ENCODE measurements at regions of chr18 and their contacts with region 1.

Region 1: GRCh38 chr18:36284671-36285295 is 12.7 kb upstream of the FHOD3 start:
- DNase-seq: no peak
- H3K4me3 ChIP-seq: no peak overlapping the region
- H3K27ac ChIP-seq: no peak overlapping the region
- H3K4me1 ChIP-seq: no peaks in the 10 kb centered on the region
- H3K27me3 ChIP-seq: peaks cover 0 to 2% (median 0%) of the 10 kb centered on the region in 4 experiments; a peak in 1 of 7 replicates
- CTCF ChIP-seq: peak in 2 of 3 experiments; percentile 82 to 83; a peak in 3 of 4 replicates
- EP300 ChIP-seq: no peak
- POLR2A ChIP-seq: no peak
- RAD21 ChIP-seq: peak; percentile 99

Region 2: GRCh38 chr18:36095936-36096519 is 188.8 kb before region 1 on chr18:
- CTCF ChIA-PET with region 1: interaction called, 23 read pairs
- POLR2A ChIA-PET with region 1: no interaction called
- DNase-seq: no peak
- H3K4me3 ChIP-seq: no peak overlapping the region
- H3K27ac ChIP-seq: no peak overlapping the region
- H3K4me1 ChIP-seq: no peaks in the 10 kb centered on the region; a peak in 1 of 7 replicates
- H3K27me3 ChIP-seq: no peaks in the 10 kb centered on the region; a peak in 1 of 7 replicates
- CTCF ChIP-seq: peak in 2 of 3 experiments; percentile 50 to 52; a peak in 2 of 4 replicates
- EP300 ChIP-seq: no peak
- POLR2A ChIP-seq: no peak
- RAD21 ChIP-seq: peak; percentile 68 to 74

Region 3: GRCh38 chr18:36179562-36180355 is 105.0 kb before region 1 on chr18:
- CTCF ChIA-PET with region 1: interaction called, 35 read pairs
- POLR2A ChIA-PET with region 1: interaction called, 3 read pairs
- DNase-seq: no peak
- H3K4me3 ChIP-seq: no peak overlapping the region
- H3K27ac ChIP-seq: no peak overlapping the region
- H3K4me1 ChIP-seq: no peaks in the 10 kb centered on the region; a peak in 1 of 7 replicates
- H3K27me3 ChIP-seq: no peaks in the 10 kb centered on the region
- CTCF ChIP-seq: no peak
- EP300 ChIP-seq: no peak
- POLR2A ChIP-seq: peak in 1 of 2 experiments; percentile 18; a peak in 1 of 3 replicates
- RAD21 ChIP-seq: no peak

Region 4: GRCh38 chr18:36195427-36196122 is 89.2 kb before region 1 on chr18:
- CTCF ChIA-PET with region 1: interaction called, 30 read pairs
- POLR2A ChIA-PET with region 1: no interaction called
- DNase-seq: no peak
- H3K4me3 ChIP-seq: no peak overlapping the region
- H3K27ac ChIP-seq: no peak overlapping the region
- H3K4me1 ChIP-seq: no peaks in the 10 kb centered on the region
- H3K27me3 ChIP-seq: no peaks in the 10 kb centered on the region
- CTCF ChIP-seq: no peak
- EP300 ChIP-seq: no peak
- POLR2A ChIP-seq: no peak
- RAD21 ChIP-seq: no peak

Region 5: DNA sequence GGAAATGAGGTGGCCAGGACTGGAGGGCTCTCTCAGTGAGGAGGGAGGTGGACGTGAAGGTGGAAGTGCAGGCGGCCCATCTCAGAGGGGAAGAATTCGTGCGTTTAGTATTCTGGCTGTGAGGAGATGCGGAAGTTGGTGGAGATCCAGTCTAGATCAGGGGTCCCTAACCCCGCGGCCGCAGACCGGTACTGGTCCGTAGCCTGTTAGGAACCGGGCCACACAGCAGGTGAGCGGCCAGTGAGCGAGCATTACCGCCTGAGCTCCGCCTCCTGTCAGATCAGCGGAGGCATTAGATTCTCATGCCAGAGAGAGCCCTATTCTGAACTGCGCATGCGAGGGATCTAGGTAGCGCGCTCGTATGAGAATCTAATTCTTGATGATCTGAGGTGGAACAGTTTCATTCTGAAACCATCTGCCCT is 11.1 kb after region 1 on chr18:
- CTCF ChIA-PET with region 1: interaction called, 19 read pairs
- POLR2A ChIA-PET with region 1: no interaction called
- DNase-seq: no peak
- H3K4me3 ChIP-seq: peak overlapping the region; percentile 19 to 81 (median 34); a peak in 7 of 8 replicates
- H3K27ac ChIP-seq: no peak overlapping the region
- H3K4me1 ChIP-seq: no peaks in the 10 kb centered on the region; a peak in 1 of 7 replicates
- H3K27me3 ChIP-seq: peaks cover 11 to 36% (median 33%) of the 10 kb centered on the region in 4 experiments
- CTCF ChIP-seq: no peak
- EP300 ChIP-seq: peak in 1 of 2 experiments; percentile 84; a peak in 1 of 3 replicates
- POLR2A ChIP-seq: no peak
- RAD21 ChIP-seq: no peak